ENCODE measurements at regions of chrX and their contacts with region 1.

Region 1: GRCh38 chrX:17736856-17737706 is at the start of gene SCML1:
- DNase-seq: peak; percentile 66
- ATAC-seq: peak; percentile 88
- H3K4me3 Mint-ChIP-seq: peak within 1 kb of the TSS; percentile 84
- H3K27ac Mint-ChIP-seq: peak within 1 kb of the TSS; percentile 74
- H3K4me1 Mint-ChIP-seq: peaks cover 15% of the 10 kb centered on the region
- H3K27me3 Mint-ChIP-seq: no peaks in the 10 kb centered on the region
- CTCF ChIP-seq: no peak
- total RNA-seq, gene SCML1: 6.4 and 6.5 TPM in 2 replicates

Region 2: DNA sequence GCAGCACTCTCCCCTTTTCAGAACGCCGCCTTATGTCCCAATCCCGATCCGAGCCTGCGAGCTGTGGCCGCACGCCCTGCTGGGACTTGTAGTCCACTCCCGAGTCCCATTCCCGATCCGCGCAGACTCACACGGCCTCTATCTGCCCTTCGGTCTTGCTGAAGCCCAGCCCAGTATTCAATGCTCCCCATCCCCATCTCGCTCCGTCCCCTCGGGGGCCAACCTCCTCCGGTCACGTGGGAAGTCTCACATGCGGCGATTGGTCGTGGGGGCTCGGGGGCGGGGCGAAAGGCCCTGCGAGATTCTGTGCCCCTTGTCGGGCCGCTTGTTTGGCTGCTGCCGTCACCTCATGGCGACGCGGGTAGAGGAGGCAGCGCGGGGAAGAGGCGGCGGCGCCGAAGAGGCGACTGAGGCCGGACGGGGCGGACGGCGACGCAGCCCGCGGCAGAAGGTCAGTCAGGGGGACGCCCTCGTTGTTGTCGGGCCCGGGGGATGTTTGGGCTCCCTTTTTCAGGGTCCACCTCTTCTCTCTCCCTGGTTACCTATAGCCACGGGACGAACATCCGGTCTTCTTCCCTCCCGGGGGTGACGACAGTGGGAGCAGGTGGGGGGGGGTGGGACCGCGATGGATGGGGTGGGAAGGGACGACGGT is 950.8 kb before region 1 on chrX and contains the start of gene TXLNG:
- CTCF ChIA-PET with region 1: no interaction called
- POLR2A ChIA-PET with region 1: no interaction called
- intact Hi-C with region 1: loop called (anchors 5 kb)
- DNase-seq: peak; percentile 81
- ATAC-seq: peak; percentile 95
- H3K4me3 Mint-ChIP-seq: peak within 1 kb of the TSS; percentile 97
- H3K27ac Mint-ChIP-seq: peak within 1 kb of the TSS; percentile 90
- H3K4me1 Mint-ChIP-seq: peaks cover 18% of the 10 kb centered on the region
- H3K27me3 Mint-ChIP-seq: no peaks in the 10 kb centered on the region
- CTCF ChIP-seq: no peak
- total RNA-seq, gene TXLNG: 12.7 and 13.1 TPM in 2 replicates

Region 3: DNA sequence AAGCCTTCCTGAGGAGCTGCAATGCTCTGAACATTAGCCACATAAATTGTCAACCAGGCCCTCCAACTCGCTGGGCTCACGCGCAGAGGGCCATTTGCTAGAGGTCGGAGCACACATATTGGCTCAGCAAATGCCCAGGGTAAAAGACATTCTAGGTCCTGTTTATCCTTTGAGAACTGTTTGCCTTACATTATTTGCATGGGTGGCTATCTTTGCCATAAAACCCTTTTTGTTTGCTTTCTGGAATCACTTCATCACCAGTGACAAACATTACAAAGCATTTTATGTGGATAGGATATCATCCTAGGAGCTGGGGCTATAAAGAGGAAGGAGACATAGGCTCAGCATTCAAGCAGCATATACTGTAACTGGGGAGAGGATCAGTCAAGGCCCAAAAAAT is 273.2 kb after region 1 on chrX:
- CTCF ChIA-PET with region 1: no interaction called
- POLR2A ChIA-PET with region 1: no interaction called
- intact Hi-C with region 1: no loop called
- DNase-seq: no peak
- ATAC-seq: no peak
- H3K4me3 Mint-ChIP-seq: no peak overlapping the region
- H3K27ac Mint-ChIP-seq: no peak overlapping the region
- H3K4me1 Mint-ChIP-seq: no peaks in the 10 kb centered on the region
- H3K27me3 Mint-ChIP-seq: no peaks in the 10 kb centered on the region
- CTCF ChIP-seq: no peak

Region 4: DNA sequence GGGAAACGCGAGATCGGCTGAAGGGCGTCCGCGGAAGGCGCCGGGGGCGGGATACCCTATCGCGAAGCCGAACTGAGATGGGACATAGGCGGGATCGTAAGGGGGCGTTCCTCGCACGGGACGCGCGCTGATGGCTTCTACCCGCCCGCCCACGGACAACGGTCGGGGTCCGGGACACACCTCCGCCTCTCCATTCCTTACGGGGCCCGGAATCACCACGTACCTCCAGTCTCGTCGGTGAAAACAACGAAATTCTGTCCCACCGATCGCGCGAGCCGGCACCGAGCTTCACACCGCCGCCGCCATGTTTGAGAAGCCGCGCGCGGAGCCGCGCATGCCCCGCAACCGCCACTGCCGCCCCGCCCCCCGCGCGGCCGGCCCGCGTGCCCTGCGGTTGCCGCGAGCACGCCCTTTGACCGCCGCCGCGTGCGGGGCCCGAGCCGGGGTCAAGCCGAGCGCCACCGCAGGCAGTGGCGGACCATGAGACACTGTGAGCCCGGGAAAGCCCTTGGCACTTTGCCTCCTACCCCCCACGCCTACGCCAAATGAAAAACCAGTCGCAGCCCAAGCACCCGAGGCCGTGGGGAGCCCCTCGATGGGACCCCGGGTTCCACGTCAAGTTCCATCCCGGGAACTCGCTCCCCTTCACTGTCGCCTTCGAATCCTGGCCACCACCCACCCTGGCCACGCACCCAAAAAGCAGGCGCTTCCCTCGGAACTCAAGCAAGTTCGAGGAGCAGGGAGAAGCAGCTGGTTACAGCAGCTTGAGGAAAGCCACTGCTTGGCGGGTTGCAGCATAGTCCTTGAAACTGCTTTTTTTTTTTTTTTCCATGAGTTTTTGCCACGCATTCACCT is 617.5 kb after region 1 on chrX and contains the start of gene SCML2:
- CTCF ChIA-PET with region 1: no interaction called
- POLR2A ChIA-PET with region 1: no interaction called
- intact Hi-C with region 1: loop called (anchors 5 kb)
- DNase-seq: peak; percentile 45
- ATAC-seq: peak; percentile 78
- H3K4me3 Mint-ChIP-seq: peak within 1 kb of the TSS; percentile 85
- H3K27ac Mint-ChIP-seq: no peak within 1 kb of the TSS
- H3K4me1 Mint-ChIP-seq: peaks cover 6% of the 10 kb centered on the region
- H3K27me3 Mint-ChIP-seq: no peaks in the 10 kb centered on the region
- CTCF ChIP-seq: no peak
- total RNA-seq, gene SCML2: 1.3 and 2.1 TPM in 2 replicates

Region 5: GRCh38 chrX:18425199-18426003 is 688.3 kb after region 1 on chrX and contains the start of gene CDKL5:
- CTCF ChIA-PET with region 1: no interaction called
- POLR2A ChIA-PET with region 1: interaction called, 6 read pairs
- intact Hi-C with region 1: loop called (anchors 1 kb)
- DNase-seq: peak; percentile 82
- ATAC-seq: peak; percentile 93
- H3K4me3 Mint-ChIP-seq: peak within 1 kb of the TSS; percentile 86
- H3K27ac Mint-ChIP-seq: peak within 1 kb of the TSS; percentile 77
- H3K4me1 Mint-ChIP-seq: peaks cover 16% of the 10 kb centered on the region
- H3K27me3 Mint-ChIP-seq: no peaks in the 10 kb centered on the region
- CTCF ChIP-seq: no peak
- total RNA-seq, gene CDKL5: 3.7 and 3.8 TPM in 2 replicates

Region 6: DNA sequence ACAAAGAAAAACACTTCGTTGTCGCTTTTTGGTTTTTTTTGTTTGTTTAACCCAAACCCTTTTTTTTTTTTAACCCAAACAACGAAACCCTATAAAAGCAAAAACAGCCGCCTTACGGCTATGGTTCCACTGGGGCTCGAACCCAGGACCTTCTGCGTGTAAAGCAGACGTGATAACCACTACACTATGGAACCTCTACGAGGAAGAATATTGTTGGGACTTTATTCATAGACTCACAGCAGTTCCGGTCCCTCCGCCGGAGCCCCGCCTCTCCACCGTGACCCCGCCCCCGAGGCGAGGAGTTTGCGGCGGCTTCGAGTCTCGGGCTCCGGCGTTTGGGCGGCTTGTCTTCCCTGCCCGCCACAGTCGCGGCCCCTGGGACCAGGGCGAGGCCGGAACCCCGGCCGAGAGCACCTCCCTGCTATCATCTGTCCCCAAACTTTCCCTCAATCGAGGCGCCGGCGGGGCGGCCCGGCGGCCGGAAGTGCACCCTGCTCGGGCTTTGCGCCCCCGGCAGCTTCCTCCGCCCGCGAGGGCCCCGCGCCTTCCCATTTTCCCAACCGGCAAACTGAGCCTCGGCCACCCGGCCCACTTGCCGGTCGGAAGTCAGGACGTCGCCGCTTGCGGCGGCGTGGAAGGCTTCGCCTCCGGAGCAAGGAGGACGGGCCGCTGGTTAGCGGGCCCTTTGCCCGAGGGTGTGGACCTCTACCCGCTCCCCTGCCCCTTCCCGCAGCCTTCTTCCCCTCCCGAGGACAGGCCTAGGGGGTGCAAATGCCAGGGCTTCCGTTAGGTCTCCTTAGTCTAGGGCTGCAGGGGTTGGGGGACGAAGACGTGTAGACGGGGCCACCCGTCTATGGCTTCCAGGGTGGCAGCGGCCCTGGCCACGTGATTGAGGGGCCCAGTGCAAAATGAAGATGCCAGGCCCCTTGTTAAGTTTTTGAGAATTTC is 938.0 kb after region 1 on chrX:
- CTCF ChIA-PET with region 1: no interaction called
- POLR2A ChIA-PET with region 1: no interaction called
- intact Hi-C with region 1: loop called (anchors 2 kb)
- DNase-seq: peak; percentile 75
- ATAC-seq: peak; percentile 88
- H3K4me3 Mint-ChIP-seq: peak overlapping the region; percentile 82
- H3K27ac Mint-ChIP-seq: peak overlapping the region; percentile 85
- H3K4me1 Mint-ChIP-seq: peaks cover 12% of the 10 kb centered on the region
- H3K27me3 Mint-ChIP-seq: no peaks in the 10 kb centered on the region
- CTCF ChIP-seq: no peak

Region 7: GRCh38 chrX:18886344-18887161 is 1149.5 kb after region 1 on chrX:
- CTCF ChIA-PET with region 1: no interaction called
- POLR2A ChIA-PET with region 1: no interaction called
- intact Hi-C with region 1: loop called (anchors 10 kb)
- DNase-seq: peak; percentile 36
- ATAC-seq: peak; percentile 81
- H3K4me3 Mint-ChIP-seq: peak overlapping the region; percentile 91
- H3K27ac Mint-ChIP-seq: peak overlapping the region; percentile 94
- H3K4me1 Mint-ChIP-seq: peaks cover 25% of the 10 kb centered on the region
- H3K27me3 Mint-ChIP-seq: no peaks in the 10 kb centered on the region
- CTCF ChIP-seq: no peak

Region 8: GRCh38 chrX:19343535-19344408 is 1606.7 kb after region 1 on chrX and contains the start of gene PDHA1:
- CTCF ChIA-PET with region 1: no interaction called
- POLR2A ChIA-PET with region 1: no interaction called
- intact Hi-C with region 1: loop called (anchors 2 kb)
- DNase-seq: peak; percentile 81
- ATAC-seq: peak; percentile 98
- H3K4me3 Mint-ChIP-seq: peak within 1 kb of the TSS; percentile 88
- H3K27ac Mint-ChIP-seq: peak within 1 kb of the TSS; percentile 83
- H3K4me1 Mint-ChIP-seq: peaks cover 14% of the 10 kb centered on the region
- H3K27me3 Mint-ChIP-seq: peaks cover 1% of the 10 kb centered on the region
- CTCF ChIP-seq: no peak
- total RNA-seq, gene PDHA1: 122 and 124 TPM in 2 replicates

Measured in activated B cell treated with CpG ODN at 0.5 μM for 24 hours (primary cell).